OCI-LY7 (cell line): ENCODE measurements at regions of chr9 and their contacts with region 1.

Region 1: GRCh38 chr9:31372799-31373587 is 1011.5 kb upstream of the ACO1 start:
- DNase-seq: no peak
- H3K4me3 ChIP-seq: no peak overlapping the region
- H3K27ac ChIP-seq: no peak overlapping the region
- H3K4me1 ChIP-seq: no peaks in the 10 kb centered on the region
- CTCF ChIP-seq: no peak

Region 2: GRCh38 chr9:31347082-31347617 is 25.8 kb before region 1 on chr9:
- CTCF ChIA-PET with region 1: interaction called, 16 read pairs
- POLR2A ChIA-PET with region 1: no interaction called
- intact Hi-C with region 1: no loop called
- DNase-seq: peak; percentile 85
- H3K4me3 ChIP-seq: peak overlapping the region; percentile 55
- H3K27ac ChIP-seq: peak overlapping the region; percentile 73
- H3K4me1 ChIP-seq: peaks cover 37% of the 10 kb centered on the region
- CTCF ChIP-seq: no peak